H1 (cell line): ENCODE measurements at regions of chr4 and their contacts with region 1.

Region 1: DNA sequence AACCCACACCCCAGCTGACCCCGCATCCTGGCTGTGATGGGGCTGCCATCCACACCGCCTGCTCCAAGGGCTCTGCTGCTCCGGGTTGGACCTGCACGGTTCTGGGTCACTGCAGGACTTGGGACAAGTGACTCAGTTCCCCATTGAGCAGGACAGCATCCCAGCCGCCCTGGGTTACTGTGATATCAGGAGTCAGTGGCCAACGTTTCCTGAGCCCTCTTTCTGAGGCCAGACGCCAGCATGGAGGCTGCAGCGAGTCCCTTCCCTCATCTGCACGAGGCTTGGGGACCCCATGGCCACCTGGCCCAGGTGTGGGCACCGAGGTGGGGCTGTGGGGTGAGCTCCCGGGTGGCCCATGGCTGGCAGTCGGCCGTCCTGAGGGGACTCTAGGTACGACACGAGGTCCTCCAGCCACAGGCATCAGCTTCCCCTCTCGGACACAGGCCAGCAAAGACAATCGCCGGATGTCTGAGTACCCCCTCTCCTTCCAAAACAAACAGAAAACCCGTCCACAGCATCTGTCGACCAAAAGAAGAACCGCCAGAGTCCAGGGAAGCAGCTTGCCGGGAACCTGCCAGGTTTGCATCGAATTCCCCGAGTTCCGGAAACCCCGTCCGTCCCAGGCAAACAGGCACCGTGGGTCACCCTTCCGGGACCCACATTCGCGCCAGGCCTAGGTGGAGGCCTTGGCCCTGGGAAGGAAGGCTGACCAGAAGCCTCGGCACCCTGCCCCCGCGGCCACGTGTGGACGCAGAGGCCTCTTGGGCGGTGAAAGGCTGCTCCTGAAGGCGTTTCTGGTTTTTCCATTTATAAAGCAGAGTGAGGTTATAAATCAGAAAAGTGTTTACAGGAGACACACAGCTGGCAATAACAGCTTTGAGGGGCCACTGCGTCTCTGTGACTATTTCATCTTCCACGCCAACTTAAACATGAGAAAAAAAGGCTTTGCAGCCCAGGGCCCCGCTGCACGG is 136.0 kb downstream of the FAM53A start:
- DNase-seq: no peak
- H3K4me3 ChIP-seq: no peak overlapping the region
- H3K27ac ChIP-seq: no peak overlapping the region
- H3K4me1 ChIP-seq: no peaks in the 10 kb centered on the region
- H3K27me3 ChIP-seq: peaks cover 0 to 3% (median 2%) of the 10 kb centered on the region in 4 experiments; a peak in 2 of 7 replicates
- CTCF ChIP-seq: no peak
- EP300 ChIP-seq: no peak
- POLR2A ChIP-seq: no peak
- RAD21 ChIP-seq: no peak

Region 2: DNA sequence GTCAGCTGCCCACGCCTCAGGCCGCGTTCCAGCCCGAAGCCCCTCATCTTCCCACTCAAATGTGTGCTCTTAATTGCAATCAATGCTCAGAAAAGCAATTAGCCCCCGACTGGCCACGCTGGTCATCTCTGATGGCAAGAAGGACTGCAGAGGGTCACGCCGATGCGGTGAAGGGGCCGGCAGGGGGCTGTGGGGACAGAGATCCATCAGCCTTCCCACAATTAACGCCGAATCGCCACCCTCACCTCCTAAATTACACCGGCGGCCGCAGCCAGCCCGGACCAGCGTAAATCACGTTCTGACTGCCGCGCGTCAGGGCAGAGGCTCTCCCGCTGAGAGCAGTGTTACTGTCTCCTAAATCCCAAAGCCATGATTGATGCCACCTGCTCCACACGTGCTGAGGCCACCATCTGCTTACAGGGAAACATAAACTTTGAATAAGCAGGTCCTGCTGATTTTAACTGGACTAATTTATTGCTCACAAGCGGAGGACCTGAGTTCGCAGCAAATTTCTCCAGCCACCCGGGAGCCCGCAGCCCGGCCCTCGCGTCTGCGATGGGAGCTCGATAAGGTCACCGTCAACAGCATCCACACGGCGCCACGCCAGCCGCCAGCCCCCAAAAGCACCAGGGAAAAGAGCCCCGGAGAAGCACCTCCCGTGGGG is 14.6 kb before region 1 on chr4:
- CTCF ChIA-PET with region 1: interaction called, 49 read pairs
- POLR2A ChIA-PET with region 1: no interaction called
- DNase-seq: no peak
- H3K4me3 ChIP-seq: no peak overlapping the region
- H3K27ac ChIP-seq: no peak overlapping the region
- H3K4me1 ChIP-seq: no peaks in the 10 kb centered on the region; a peak in 1 of 7 replicates
- H3K27me3 ChIP-seq: no peaks in the 10 kb centered on the region
- CTCF ChIP-seq: no peak
- EP300 ChIP-seq: no peak
- POLR2A ChIP-seq: no peak
- RAD21 ChIP-seq: no peak

Region 3: DNA sequence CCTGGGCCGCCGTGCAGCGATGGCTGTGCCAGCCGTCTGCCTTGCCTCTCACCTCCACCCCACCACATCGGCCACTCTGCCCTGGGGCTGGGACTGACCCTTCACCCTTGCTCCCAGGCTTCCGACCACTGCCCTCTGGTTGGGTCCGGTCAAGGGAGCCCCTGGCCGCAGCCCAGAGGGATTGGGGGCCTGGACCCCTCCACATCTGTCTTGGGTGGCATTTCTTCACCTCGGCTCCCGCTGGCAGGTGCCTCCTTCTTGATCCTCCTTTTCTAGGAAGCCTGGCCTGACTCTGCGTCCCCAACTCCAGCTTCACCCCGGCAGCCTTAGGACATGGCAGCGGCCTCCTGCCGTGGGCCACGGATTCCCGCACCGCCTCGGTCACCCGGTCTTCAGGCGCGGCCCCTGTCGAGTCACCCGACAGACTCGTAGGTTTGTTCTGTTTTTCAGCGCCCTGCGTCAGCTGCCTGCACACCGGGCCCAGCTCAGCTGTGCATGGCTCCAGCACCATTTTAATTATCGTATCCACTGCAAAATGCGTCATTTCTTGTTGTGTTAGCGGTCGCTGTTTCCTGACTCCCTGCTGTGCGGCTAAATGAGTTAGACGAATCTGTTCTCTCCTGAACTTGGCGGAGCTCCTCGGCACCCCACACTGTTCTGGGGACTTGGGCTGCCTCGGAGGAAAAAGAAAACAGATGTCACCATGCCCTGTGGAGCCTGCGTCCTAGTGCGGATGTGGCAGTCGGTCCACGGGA is 11.9 kb after region 1 on chr4:
- CTCF ChIA-PET with region 1: interaction called, 32 read pairs
- POLR2A ChIA-PET with region 1: interaction called, 7 read pairs
- DNase-seq: no peak
- H3K4me3 ChIP-seq: no peak overlapping the region
- H3K27ac ChIP-seq: no peak overlapping the region
- H3K4me1 ChIP-seq: no peaks in the 10 kb centered on the region
- H3K27me3 ChIP-seq: no peaks in the 10 kb centered on the region
- CTCF ChIP-seq: no peak
- EP300 ChIP-seq: no peak
- POLR2A ChIP-seq: no peak
- RAD21 ChIP-seq: no peak

Region 4: GRCh38 chr4:1567803-1568581 is 19.9 kb after region 1 on chr4:
- CTCF ChIA-PET with region 1: interaction called, 32 read pairs
- POLR2A ChIA-PET with region 1: interaction called, 7 read pairs
- DNase-seq: no peak
- H3K4me3 ChIP-seq: no peak overlapping the region
- H3K27ac ChIP-seq: no peak overlapping the region
- H3K4me1 ChIP-seq: peaks cover 2 to 34% (median 26%) of the 10 kb centered on the region in 4 experiments
- H3K27me3 ChIP-seq: no peaks in the 10 kb centered on the region; a peak in 1 of 7 replicates
- CTCF ChIP-seq: no peak
- EP300 ChIP-seq: no peak
- POLR2A ChIP-seq: no peak
- RAD21 ChIP-seq: no peak